WTC11 (cell line): ENCODE measurements at regions of chr7 and their contacts with region 1.

Region 1: DNA sequence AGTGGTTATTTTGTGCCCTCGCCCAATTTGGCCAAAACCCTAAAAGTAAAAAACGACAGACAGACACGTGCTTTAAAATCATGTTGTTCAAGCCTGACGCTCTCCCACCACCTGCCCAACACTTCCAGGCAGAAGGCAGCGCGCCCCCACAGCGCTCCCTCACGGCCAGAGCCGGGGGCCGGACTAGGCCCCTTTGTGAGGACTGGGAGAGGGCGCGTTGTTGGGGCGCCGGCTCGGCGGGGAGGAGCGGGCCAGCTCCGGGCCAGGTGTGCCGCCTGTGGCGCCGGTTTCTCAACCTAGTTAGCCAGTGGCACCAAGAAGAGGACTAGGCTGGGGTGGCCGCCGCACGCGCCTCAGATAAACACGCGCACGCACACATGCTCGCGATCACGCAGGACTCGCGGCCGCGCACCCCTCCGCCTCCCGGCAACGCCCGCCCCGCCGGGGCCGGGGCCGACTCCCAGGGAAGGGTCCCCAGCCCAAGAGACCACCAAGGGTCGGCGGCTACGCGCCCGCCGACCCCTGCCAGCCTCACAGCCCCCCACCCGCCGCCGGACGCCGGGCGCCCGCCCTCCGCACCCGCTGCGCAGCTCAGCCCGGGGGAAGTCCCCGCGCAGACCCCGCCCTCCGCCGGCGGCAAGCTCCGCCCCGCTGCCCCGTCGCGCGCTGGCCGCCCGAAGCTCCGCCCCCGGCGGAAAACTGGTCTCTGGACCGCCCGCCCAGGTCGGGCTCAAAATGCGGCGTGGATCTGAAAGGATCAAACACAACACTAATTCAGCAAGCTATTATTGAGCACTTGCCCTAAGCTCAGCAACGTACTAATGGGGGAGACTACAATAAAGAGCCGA is at the start of gene IMMP2L:
- DNase-seq: peak; percentile 87
- ATAC-seq: peak; percentile 87
- H3K4me3 Mint-ChIP-seq: peak within 1 kb of the TSS; percentile 87
- H3K27ac Mint-ChIP-seq: peak within 1 kb of the TSS; percentile 92
- H3K4me1 Mint-ChIP-seq: peaks cover 24% of the 10 kb centered on the region
- H3K27me3 Mint-ChIP-seq: no peaks in the 10 kb centered on the region
- CTCF ChIP-seq: no peak
- total RNA-seq, gene IMMP2L: 13.6 to 15.9 TPM (median 13.8 TPM) in 3 replicates

Region 2: DNA sequence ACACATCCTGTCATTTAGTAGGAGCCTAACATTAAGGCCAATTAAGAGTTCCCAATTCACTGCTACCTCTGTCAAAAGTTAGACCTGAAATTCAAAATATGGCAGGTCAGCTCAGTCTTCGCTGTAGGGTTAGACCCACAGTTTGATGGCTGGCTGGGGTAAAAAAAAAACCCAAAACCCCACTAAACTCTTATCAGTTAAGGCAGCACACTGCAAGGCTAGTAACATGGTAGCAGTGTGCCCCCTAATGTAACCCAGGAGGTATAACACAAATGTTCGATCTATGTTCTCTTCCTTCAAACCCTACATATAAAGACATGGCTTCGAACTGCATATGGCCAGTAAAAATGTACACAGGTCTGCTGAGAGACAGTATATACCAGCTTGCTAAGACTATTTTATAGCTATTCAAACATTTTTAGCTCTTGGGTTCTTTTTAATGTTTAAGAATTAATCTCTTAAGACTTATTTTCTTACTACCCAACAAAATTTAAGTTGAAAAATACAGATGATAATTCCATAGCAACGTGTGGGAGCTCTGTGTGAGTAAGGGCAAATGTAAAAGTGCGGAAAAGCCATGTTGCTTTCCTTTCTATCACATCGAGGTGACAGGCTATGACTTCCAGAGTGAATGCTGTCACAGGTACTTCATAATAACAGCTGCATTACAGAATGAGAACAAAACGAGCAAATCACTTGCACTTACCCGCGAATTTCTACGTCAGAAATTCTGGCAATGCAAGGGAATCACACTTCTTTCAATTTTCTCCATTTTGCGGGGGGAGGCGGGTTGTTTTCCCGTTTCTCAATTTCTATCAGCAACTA is 168.6 kb after region 1 on chr7:
- CTCF ChIA-PET with region 1: interaction called, 14 read pairs
- POLR2A ChIA-PET with region 1: no interaction called
- DNase-seq: no peak
- ATAC-seq: peak; percentile 76
- H3K4me3 Mint-ChIP-seq: no peak overlapping the region
- H3K27ac Mint-ChIP-seq: no peak overlapping the region
- H3K4me1 Mint-ChIP-seq: no peaks in the 10 kb centered on the region
- H3K27me3 Mint-ChIP-seq: no peaks in the 10 kb centered on the region
- CTCF ChIP-seq: 0 out of 2 replicates have a peak, but pooled peaks have one; percentile 27